T-cell (primary cell): ENCODE measurements at regions of chr5 and their contacts with region 1.

Region 1: GRCh38 chr5:174793684-174794328 is 69.4 kb downstream of the MSX2 start:
- DNase-seq: peak in 28 of 35 experiments; percentile 0 to 47 (median 14)
- ATAC-seq: peak; percentile 35 to 53 (median 46)
- H3K4me3 ChIP-seq: no peak overlapping the region
- H3K4me3 Mint-ChIP-seq: no peak overlapping the region
- H3K27ac ChIP-seq: no peak overlapping the region
- H3K27ac Mint-ChIP-seq: no peak overlapping the region
- H3K4me1 ChIP-seq: peaks cover 0 to 4% of the 10 kb centered on the region in 2 experiments
- H3K4me1 Mint-ChIP-seq: peaks cover 0 to 7% (median 5%) of the 10 kb centered on the region in 3 donors
- H3K27me3 ChIP-seq: peaks cover 2 to 26% of the 10 kb centered on the region in 2 experiments
- H3K27me3 Mint-ChIP-seq: peaks cover 43 to 57% of the 10 kb centered on the region in 2 donors

Region 2: DNA sequence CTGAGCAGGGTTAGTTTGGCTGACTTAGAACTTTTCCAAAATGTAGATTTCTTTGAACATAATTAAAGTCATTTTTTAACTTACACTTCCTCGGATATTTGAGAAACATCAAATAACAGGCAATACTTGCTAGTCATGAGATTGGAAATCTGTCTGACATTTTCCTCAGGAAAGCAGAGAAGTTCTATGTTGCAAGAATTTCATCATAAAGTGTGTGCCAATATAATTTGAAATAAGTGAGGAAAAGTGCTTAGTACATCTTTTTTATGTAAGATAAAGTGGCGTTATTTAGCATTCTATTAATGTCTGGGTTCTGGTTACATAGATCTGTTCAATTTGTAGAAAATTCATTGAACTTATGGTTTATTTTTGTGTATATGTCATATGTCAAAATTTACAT is 853.5 kb before region 1 on chr5:
- CTCF ChIA-PET with region 1: no interaction called
- POLR2A ChIA-PET with region 1: no interaction called
- DNase-seq: no peak
- ATAC-seq: no peak
- H3K4me3 ChIP-seq: no peak overlapping the region
- H3K4me3 Mint-ChIP-seq: no peak overlapping the region
- H3K27ac ChIP-seq: no peak overlapping the region
- H3K27ac Mint-ChIP-seq: no peak overlapping the region
- H3K4me1 ChIP-seq: no peaks in the 10 kb centered on the region
- H3K4me1 Mint-ChIP-seq: peaks cover 0 to 7% (median 3%) of the 10 kb centered on the region in 3 donors
- H3K27me3 ChIP-seq: no peaks in the 10 kb centered on the region
- H3K27me3 Mint-ChIP-seq: no peaks in the 10 kb centered on the region

Region 3: DNA sequence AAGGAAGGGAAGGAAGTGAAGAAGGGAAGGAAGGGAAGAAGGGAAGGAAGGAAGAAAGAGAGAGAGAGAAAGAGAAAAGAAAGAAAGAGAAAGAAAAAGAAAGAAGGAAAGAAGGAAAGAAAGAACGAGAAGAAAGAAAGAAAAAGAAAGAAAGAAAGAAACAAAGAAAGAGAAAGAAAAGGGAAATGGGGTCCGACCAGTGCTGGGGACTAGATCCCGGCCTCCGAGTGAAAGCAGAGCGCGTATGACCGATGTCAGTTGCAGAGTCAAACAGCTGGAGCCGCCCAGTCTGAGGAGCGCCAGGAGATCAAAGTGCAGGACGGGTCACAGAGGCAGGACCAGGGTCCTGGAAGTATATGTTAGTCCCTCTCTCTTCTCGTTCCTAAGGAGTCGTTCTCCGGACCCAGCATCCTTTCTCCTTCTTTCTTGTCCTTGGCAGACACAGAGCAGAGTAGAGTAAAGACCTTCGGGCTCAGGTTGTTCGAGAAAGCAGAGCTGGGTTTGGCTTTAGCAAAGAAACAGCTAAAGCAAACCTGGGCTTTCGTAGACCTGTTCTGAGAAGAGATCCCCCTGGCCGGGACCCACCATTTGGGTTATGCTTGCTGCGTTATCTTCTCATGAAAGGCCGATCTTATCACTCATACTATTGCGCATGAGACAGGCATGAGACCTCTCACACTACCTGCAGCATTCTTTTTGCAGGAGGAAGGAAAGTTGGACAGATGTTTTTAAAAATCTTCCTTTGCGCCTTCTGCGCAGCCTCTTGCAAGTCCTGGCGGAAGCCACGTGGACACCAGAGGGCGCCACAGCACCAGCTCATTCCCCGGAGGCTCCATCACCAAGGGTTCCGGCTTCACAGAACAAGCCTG is 374.6 kb before region 1 on chr5:
- CTCF ChIA-PET with region 1: interaction called in 1 of 2 experiments, 21 read pairs
- POLR2A ChIA-PET with region 1: no interaction called
- DNase-seq: peak; percentile 29 to 84 (median 66)
- ATAC-seq: peak; percentile 77 to 87 (median 80)
- H3K4me3 ChIP-seq: peak overlapping the region in 1 of 2 donors; percentile 4
- H3K4me3 Mint-ChIP-seq: peak overlapping the region; percentile 49 to 65 (median 64)
- H3K27ac ChIP-seq: no peak overlapping the region
- H3K27ac Mint-ChIP-seq: no peak overlapping the region
- H3K4me1 ChIP-seq: peaks cover 0 to 10% of the 10 kb centered on the region in 2 experiments
- H3K4me1 Mint-ChIP-seq: peaks cover 14 to 17% (median 16%) of the 10 kb centered on the region in 3 donors
- H3K27me3 ChIP-seq: peaks cover 0 to 6% of the 10 kb centered on the region in 2 experiments
- H3K27me3 Mint-ChIP-seq: peaks cover 13 to 20% of the 10 kb centered on the region in 2 donors

Region 4: DNA sequence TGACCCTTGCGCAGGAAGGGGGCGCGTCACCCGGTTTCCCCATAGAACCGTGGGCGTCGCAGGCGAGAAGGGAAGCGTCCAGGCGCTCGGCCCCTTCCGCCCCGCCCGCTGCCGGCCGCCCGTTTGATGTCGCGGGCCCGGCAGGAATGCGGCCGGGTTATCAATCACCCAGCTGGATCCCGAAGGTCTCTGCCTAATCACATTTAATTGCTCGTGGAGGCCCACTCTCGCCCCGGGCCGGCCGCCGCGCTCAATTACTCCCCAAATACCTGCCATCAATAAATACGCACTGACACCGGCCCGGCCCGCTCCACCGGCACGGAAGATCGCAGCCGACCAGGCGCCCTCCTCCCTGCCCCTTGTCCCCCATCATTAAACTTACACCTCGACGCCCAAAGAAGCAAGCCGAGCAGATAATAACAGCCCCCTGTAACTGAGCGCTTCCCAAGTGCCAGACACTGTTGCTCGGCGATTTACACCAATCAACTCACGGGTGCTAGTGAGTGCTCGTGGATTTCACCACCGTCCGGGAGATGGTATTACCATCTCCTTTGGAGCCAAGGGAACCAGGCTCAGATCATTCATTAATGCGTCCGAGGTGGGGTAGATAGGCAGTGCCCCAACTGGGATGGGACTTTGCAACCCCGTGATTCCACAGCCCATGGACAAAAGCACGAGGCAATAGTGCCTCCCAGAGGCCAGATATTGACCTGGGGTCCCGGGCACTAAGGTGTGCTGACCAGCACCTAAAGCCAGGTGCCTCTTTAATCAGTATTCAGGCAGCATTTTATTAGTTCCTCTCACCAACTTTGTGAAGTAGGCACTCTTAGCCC is 58.1 kb before region 1 on chr5:
- CTCF ChIA-PET with region 1: no interaction called
- POLR2A ChIA-PET with region 1: no interaction called
- DNase-seq: peak in 1 of 35 experiments; percentile 7
- ATAC-seq: no peak
- H3K4me3 ChIP-seq: no peak overlapping the region
- H3K4me3 Mint-ChIP-seq: no peak overlapping the region
- H3K27ac ChIP-seq: no peak overlapping the region
- H3K27ac Mint-ChIP-seq: peak overlapping the region in 1 of 2 donors; percentile 46
- H3K4me1 ChIP-seq: peaks cover 0 to 2% of the 10 kb centered on the region in 2 experiments
- H3K4me1 Mint-ChIP-seq: peaks cover 0 to 5% (median 5%) of the 10 kb centered on the region in 3 donors
- H3K27me3 ChIP-seq: peaks cover 27 to 55% of the 10 kb centered on the region in 2 experiments
- H3K27me3 Mint-ChIP-seq: peaks cover 66 to 77% of the 10 kb centered on the region in 2 donors